ENCODE measurements at regions of chr14 and their contacts with region 1.

Region 1: DNA sequence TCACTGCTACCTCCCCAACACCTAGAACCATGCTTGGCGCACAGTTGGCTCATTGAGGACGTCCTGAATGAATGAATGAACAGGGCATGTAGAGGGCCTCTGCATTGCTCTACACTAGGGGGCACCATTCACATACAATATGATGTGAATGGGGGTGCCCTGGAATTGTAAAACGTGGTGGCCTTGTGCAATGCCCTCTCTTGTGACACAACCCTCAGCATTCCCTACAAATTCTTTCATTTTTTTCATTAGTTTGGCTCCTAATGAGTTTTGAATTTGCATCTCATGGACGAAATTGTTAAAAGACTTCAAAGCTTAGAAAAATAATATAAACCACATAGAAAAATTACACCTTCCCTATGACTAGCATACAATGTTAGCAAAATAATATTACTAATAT is 2.3 kb upstream of the DIO2 start:
- DNase-seq: peak; percentile 39
- H3K4me3 ChIP-seq: no peak overlapping the region
- H3K27ac ChIP-seq: no peak overlapping the region
- H3K4me1 ChIP-seq: no peaks in the 10 kb centered on the region
- H3K27me3 ChIP-seq: peaks cover 0 to 2% of the 10 kb centered on the region in 2 experiments
- CTCF ChIP-seq: peak; percentile 43 to 55
- POLR2A ChIP-seq: no peak

Region 2: DNA sequence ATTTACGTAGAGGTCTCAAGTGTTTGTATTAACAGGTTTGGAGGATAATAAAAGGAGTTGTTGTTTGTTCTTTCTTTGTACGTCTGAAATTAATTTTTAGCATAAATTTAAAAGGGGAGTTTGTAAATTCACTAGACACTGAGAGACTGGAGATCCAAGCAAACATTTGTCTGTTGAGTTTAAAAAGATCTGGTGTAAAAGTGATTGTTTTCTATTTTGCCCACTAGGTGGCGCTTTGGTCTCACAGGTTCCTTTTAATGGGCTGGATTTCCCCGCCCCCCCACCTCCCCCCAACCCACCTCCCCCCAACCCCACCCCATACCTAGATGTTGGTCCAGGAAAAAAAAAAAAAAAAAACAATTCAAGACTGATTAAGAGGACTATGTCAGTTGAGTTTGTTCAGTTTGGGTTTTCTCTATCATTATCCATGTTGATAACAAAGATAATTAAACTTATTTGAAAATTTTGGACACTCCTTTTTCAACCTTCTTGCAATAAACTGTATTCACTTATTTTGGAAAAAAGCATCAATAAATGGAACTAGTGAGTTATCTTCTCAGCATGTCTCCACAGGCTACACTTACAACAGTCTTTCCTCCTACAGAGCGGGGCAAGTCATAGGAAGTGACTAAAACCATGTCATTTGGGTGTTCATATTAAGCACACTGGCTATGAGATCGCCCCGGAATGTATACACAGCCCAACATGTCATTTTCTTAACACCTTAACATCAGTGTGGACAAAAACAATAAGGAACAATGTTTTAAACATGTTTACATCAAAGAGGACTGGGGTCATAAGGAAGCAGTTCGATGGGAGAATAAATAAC is 1202.3 kb before region 1 on chr14:
- CTCF ChIA-PET with region 1: no interaction called
- POLR2A ChIA-PET with region 1: no interaction called
- dilution Hi-C with region 1: no loop called
- intact Hi-C with region 1: loop called (anchors 10 kb)
- DNase-seq: peak; percentile 76
- H3K4me3 ChIP-seq: no peak overlapping the region
- H3K27ac ChIP-seq: peak overlapping the region; percentile 63
- H3K4me1 ChIP-seq: peaks cover 11% of the 10 kb centered on the region
- H3K27me3 ChIP-seq: no peaks in the 10 kb centered on the region
- CTCF ChIP-seq: peak in 1 of 2 donors; percentile 42
- POLR2A ChIP-seq: no peak

Region 3: DNA sequence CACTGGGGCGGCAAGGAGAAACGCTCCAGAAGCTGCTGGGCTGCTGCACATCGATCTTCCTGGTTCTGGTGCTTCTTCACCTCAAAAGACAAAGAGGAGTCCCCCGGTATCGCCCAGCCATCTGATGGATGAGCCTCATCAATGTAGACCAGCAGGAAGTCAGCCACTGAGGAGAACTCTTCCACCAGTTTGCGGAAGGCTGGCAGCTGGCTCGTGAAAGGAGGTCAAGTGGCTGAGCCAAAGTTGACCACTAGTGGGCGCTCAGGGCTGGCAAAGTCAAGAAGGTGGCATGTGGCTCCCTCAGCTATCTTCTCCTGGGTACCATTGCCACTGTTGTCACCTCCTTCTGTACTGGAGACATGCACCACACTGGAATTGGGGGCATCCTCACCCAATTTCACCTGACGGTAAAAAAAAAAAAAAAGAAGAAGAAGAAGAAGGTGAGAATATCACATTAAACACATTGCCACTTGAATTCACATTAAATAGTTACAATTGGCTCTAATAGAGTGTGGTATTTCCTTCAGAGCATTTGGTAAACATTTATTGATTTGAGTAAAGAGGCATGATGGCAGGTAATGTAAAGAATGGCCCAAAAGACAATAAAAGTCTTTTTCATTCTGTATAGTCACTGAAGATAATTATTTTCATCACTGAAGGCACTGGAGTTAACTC is 10.6 kb before region 1 on chr14:
- CTCF ChIA-PET with region 1: interaction called, 26 read pairs
- POLR2A ChIA-PET with region 1: no interaction called
- dilution Hi-C with region 1: no loop called
- intact Hi-C with region 1: no loop called
- DNase-seq: no peak
- H3K4me3 ChIP-seq: no peak overlapping the region
- H3K27ac ChIP-seq: no peak overlapping the region
- H3K4me1 ChIP-seq: no peaks in the 10 kb centered on the region
- H3K27me3 ChIP-seq: no peaks in the 10 kb centered on the region
- CTCF ChIP-seq: peak; percentile 43 to 44
- POLR2A ChIP-seq: no peak

Region 4: GRCh38 chr14:80364274-80364673 is 150.7 kb after region 1 on chr14:
- CTCF ChIA-PET with region 1: interaction called, 8 read pairs
- POLR2A ChIA-PET with region 1: no interaction called
- dilution Hi-C with region 1: no loop called
- intact Hi-C with region 1: loop called (anchors 5 kb)
- DNase-seq: peak; percentile 11
- H3K4me3 ChIP-seq: no peak overlapping the region
- H3K27ac ChIP-seq: no peak overlapping the region
- H3K4me1 ChIP-seq: no peaks in the 10 kb centered on the region
- H3K27me3 ChIP-seq: no peaks in the 10 kb centered on the region
- CTCF ChIP-seq: no peak
- POLR2A ChIP-seq: no peak

Region 5: DNA sequence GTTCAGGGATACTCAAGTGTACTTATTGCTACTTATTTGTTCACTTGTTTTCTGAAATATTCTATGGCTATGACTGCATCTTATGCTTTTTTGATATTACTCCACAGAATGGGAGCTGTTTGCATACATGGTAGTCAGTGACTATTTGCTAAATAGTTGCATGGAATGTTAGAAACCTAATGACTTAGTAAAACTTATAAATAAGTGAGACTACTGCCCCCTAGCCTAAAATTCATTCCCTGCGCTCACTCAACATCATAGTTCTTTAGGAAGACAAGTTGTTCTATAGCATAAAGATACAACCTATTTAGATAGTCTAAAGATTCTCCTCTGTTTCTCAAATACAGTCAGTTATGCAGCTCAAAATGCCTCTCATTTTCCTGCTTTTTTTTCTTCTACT is 422.5 kb after region 1 on chr14:
- CTCF ChIA-PET with region 1: interaction called, 4 read pairs
- POLR2A ChIA-PET with region 1: no interaction called
- dilution Hi-C with region 1: no loop called
- intact Hi-C with region 1: loop called (anchors 2 kb)
- DNase-seq: no peak
- H3K4me3 ChIP-seq: no peak overlapping the region
- H3K27ac ChIP-seq: no peak overlapping the region
- H3K4me1 ChIP-seq: peaks cover 38% of the 10 kb centered on the region
- H3K27me3 ChIP-seq: no peaks in the 10 kb centered on the region
- CTCF ChIP-seq: peak in 1 of 2 donors; percentile 11
- POLR2A ChIP-seq: no peak

Region 6: DNA sequence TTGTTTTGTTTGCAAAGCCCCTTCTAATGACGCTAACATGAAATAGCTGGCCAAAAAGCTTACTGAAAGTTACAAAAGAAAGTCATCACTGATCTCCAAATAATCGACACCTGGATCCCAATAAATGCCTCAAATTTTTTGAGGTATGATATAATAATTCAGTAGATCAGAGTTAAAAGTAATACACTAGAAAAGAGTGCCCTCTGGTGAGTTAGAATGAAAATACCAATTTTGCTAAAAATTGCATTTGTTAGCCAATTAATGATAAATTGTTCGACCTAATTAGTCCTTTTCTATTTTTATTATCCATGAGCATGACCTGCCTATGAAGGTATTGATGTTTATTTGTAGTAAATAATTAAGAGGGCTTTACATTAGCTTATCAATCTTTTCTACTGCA is 649.4 kb after region 1 on chr14:
- CTCF ChIA-PET with region 1: interaction called, 34 read pairs
- POLR2A ChIA-PET with region 1: no interaction called
- dilution Hi-C with region 1: no loop called
- intact Hi-C with region 1: no loop called
- DNase-seq: peak; percentile 12
- H3K4me3 ChIP-seq: no peak overlapping the region
- H3K27ac ChIP-seq: no peak overlapping the region
- H3K4me1 ChIP-seq: no peaks in the 10 kb centered on the region
- H3K27me3 ChIP-seq: no peaks in the 10 kb centered on the region
- CTCF ChIP-seq: peak in 1 of 2 donors; percentile 5
- POLR2A ChIP-seq: no peak

Measured in endothelial cell of umbilical vein (primary cell).